GM10248 (cell line): ENCODE measurements at regions of chr2 and their contacts with region 1.

Region 1: GRCh38 chr2:148391324-148391723 is 253.2 kb upstream of the EPC2 start:
- DNase-seq: no peak
- CTCF ChIP-seq: no peak

Region 2: GRCh38 chr2:148375214-148375613 is 16.1 kb before region 1 on chr2:
- CTCF ChIA-PET with region 1: interaction called, 10 read pairs
- POLR2A ChIA-PET with region 1: no interaction called
- DNase-seq: no peak
- CTCF ChIP-seq: no peak